PC-9 (cell line): ENCODE measurements at regions of chr1 and their contacts with region 1.

Region 1: GRCh38 chr1:235328357-235329138 is at the start of gene GGPS1:
- DNase-seq: peak; percentile 97 to 99
- H3K4me3 ChIP-seq: peak within 1 kb of the TSS; percentile 89
- H3K27ac ChIP-seq: peak within 1 kb of the TSS; percentile 79
- H3K4me1 ChIP-seq: peaks cover 47% of the 10 kb centered on the region
- H3K27me3 ChIP-seq: no peaks in the 10 kb centered on the region
- CTCF ChIP-seq: no peak
- total RNA-seq, gene GGPS1: 47.4 and 61.7 TPM in 2 replicates

Region 2: DNA sequence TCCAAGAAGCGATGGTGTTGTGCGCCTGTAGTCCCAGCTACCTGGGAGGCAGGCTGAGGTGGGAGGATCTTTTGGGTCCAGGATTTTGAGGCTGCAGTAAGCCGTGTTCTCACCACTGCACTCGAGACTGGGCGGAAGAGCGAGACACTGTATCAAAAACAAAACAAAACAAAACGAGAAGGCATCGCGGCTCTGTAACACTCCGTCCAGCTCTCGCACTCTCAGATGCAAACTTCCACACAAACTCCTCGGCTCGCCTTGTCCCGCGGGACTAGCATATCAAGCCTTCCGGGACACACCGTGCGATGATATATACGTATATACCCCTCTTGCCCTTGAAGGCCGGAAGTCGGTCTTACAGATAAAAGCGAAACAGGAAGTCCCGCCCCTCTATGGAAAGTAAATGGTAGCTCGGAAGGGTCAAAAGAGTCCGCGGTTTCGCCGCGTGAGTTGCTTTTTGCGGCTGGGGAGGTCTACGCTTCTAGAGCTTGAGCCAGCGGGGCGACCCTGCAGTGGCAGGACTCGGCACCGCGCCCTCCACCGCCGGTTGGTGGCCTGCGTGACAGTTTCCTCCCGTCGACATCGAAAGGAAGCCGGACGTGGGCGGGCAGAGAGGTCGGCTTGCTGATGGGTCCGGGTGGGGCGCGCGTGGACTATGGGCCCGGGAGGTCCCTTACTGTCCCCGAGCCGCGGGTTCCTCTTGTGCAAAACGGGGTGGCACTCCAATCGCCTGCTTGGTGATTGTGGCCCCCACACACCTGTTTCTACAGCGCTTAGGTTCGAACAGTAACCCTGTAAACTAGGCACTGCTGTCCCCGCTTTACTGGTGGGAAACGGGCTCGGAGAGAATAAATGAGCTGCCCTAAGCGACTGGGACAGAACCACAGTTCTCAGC is 955.2 kb before region 1 on chr1 and contains the start of gene COA6:
- CTCF ChIA-PET with region 1: no interaction called
- POLR2A ChIA-PET with region 1: no interaction called
- intact Hi-C with region 1: loop called (anchors 5 kb)
- DNase-seq: peak; percentile 90 to 92
- H3K4me3 ChIP-seq: peak within 1 kb of the TSS; percentile 98
- H3K27ac ChIP-seq: peak within 1 kb of the TSS; percentile 99
- H3K4me1 ChIP-seq: peaks cover 46% of the 10 kb centered on the region
- H3K27me3 ChIP-seq: no peaks in the 10 kb centered on the region
- CTCF ChIP-seq: no peak
- total RNA-seq, gene COA6: 73.8 and 77.1 TPM in 2 replicates

Region 3: GRCh38 chr1:235229868-235230267 is 98.7 kb before region 1 on chr1:
- CTCF ChIA-PET with region 1: no interaction called
- POLR2A ChIA-PET with region 1: interaction called, 21 read pairs
- intact Hi-C with region 1: no loop called
- DNase-seq: no peak
- H3K4me3 ChIP-seq: no peak overlapping the region
- H3K27ac ChIP-seq: no peak overlapping the region
- H3K4me1 ChIP-seq: no peaks in the 10 kb centered on the region
- H3K27me3 ChIP-seq: no peaks in the 10 kb centered on the region
- CTCF ChIP-seq: no peak

Region 4: DNA sequence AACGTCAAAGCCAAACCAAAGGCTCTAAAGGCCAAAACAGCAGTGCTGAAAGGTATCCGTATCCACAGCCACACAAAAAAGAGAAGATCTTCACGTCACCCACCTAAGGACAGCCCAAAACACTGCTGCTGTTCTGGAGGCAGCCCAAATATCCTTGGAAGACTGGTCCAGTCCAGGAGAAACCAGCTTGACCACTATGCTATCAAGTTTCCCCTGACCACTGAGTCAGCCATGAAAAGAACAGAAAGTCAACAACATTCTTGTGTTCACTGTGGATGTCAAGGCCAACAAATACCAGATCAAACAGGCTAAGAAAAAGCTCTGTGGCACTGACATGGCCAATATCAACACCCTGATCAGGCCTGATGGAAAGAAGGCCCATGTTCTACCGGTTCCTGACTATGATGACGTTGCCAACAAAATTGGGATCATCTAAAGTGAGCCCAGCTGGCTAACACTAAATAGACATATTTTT is 32.6 kb before region 1 on chr1:
- CTCF ChIA-PET with region 1: no interaction called
- POLR2A ChIA-PET with region 1: no interaction called
- intact Hi-C with region 1: loop called (anchors 2 kb)
- DNase-seq: peak; percentile 81 to 91
- H3K4me3 ChIP-seq: peak overlapping the region; percentile 17; the same call in 1 of the 2 replicates
- H3K27ac ChIP-seq: peak overlapping the region; percentile 77
- H3K4me1 ChIP-seq: peaks cover 40% of the 10 kb centered on the region
- H3K27me3 ChIP-seq: no peaks in the 10 kb centered on the region
- CTCF ChIP-seq: no peak

Region 5: DNA sequence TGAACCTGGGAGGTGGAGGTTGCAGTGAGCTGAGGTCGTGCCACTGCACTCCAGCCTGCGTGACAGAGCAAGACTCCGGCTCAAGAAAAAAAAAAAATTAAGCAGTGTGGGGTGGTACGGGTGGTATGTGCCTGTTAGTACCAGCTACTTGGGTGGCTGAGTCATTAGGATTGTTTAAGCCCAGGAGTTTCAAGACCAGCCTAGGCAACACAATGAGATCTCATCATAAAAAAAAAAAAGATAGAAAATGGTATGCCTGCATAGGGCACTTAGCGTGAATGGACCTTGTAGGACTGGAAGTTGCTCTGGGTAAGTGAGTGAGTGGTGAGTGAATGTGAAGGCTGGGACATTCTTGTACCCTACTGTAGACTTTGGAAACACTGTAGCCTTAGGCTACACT is 75.6 kb after region 1 on chr1:
- CTCF ChIA-PET with region 1: no interaction called
- POLR2A ChIA-PET with region 1: interaction called, 3 read pairs
- intact Hi-C with region 1: loop called (anchors 2 kb)
- DNase-seq: peak; percentile 58 to 77
- H3K4me3 ChIP-seq: no peak overlapping the region
- H3K27ac ChIP-seq: peak overlapping the region; percentile 39; the same call in 1 of the 2 replicates
- H3K4me1 ChIP-seq: peaks cover 40% of the 10 kb centered on the region
- H3K27me3 ChIP-seq: no peaks in the 10 kb centered on the region
- CTCF ChIP-seq: no peak

Region 6: GRCh38 chr1:235504496-235505222 is 176.1 kb after region 1 on chr1:
- CTCF ChIA-PET with region 1: no interaction called
- POLR2A ChIA-PET with region 1: no interaction called
- intact Hi-C with region 1: loop called (anchors 1 kb)
- DNase-seq: peak; percentile 93 to 100
- H3K4me3 ChIP-seq: peak overlapping the region; percentile 77
- H3K27ac ChIP-seq: peak overlapping the region; percentile 97
- H3K4me1 ChIP-seq: peaks cover 38% of the 10 kb centered on the region
- H3K27me3 ChIP-seq: no peaks in the 10 kb centered on the region
- CTCF ChIP-seq: peak; percentile 86